MCF 10A (cell line): ENCODE measurements at regions of chr7 and their contacts with region 1.

Region 1: DNA sequence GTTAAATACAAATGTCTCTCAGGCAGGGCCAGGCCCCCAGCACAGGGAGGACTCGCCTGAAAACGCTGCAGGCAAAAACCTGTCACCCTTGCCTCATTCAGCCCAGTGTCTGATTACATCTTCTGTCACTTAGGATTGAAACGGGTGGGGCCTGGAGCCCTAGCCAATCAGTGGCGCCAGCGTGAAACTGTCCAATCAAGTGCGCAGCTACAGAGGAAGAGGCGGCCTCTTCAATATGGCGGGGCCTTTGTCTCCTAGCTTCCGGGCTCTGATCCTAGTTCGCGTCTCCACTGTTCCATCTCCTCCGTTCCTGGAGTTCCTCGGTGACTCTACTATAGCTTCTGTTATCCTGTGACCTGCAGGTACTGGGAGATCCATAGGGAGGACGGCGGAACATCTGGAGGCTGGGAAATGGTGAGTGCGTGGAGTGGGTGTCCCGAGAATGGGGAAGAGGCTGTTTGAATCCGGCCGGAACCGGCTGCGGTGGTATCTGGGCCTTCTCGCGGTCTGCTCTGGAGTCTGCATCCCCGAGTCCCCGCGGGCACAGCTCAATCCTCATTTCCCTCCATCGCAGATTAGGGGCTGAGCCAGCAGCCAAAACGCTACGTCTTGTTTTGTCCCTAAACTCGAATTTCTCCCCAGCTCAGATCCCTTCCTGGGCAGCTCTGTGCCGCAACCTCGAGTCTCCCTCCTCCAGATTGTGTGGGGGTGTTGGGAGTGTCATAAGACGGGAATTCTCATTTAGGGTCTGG is at the start of gene ZNF736:
- DNase-seq: peak; percentile 97
- H3K4me3 Mint-ChIP-seq: peak within 1 kb of the TSS; percentile 97
- H3K27ac Mint-ChIP-seq: peak within 1 kb of the TSS; percentile 99
- H3K4me1 Mint-ChIP-seq: no peaks in the 10 kb centered on the region
- H3K27me3 Mint-ChIP-seq: no peaks in the 10 kb centered on the region
- CTCF ChIP-seq: no peak
- total RNA-seq, gene ZNF736: 9.2 and 13.1 TPM in 2 replicates

Region 2: GRCh38 chr7:64300641-64301040 is 13.3 kb before region 1 on chr7:
- CTCF ChIA-PET with region 1: interaction called, 3 read pairs
- POLR2A ChIA-PET with region 1: interaction called, 12 read pairs
- intact Hi-C with region 1: no loop called
- DNase-seq: peak; percentile 66
- H3K4me3 Mint-ChIP-seq: no peak overlapping the region
- H3K27ac Mint-ChIP-seq: peak overlapping the region; percentile 63
- H3K4me1 Mint-ChIP-seq: no peaks in the 10 kb centered on the region
- H3K27me3 Mint-ChIP-seq: no peaks in the 10 kb centered on the region
- CTCF ChIP-seq: no peak